WTC11 (cell line): ENCODE measurements at regions of chr20 and their contacts with region 1.

Region 1: GRCh38 chr20:22691369-22692118 is 107.2 kb upstream of the FOXA2 start:
- DNase-seq: peak; percentile 80
- ATAC-seq: peak; percentile 96
- H3K4me3 Mint-ChIP-seq: no peak overlapping the region
- H3K27ac Mint-ChIP-seq: no peak overlapping the region
- H3K4me1 Mint-ChIP-seq: peaks cover 3% of the 10 kb centered on the region
- H3K27me3 Mint-ChIP-seq: peaks cover 20% of the 10 kb centered on the region
- CTCF ChIP-seq: peak; percentile 77

Region 2: GRCh38 chr20:22333885-22334545 is 357.5 kb before region 1 on chr20:
- CTCF ChIA-PET with region 1: interaction called, 17 read pairs
- POLR2A ChIA-PET with region 1: no interaction called
- DNase-seq: peak; percentile 75
- ATAC-seq: peak; percentile 94
- H3K4me3 Mint-ChIP-seq: no peak overlapping the region
- H3K27ac Mint-ChIP-seq: no peak overlapping the region
- H3K4me1 Mint-ChIP-seq: 0 out of 2 replicates have a peak, but pooled peaks cover under 1% of the 10 kb centered on the region
- H3K27me3 Mint-ChIP-seq: peaks cover 21% of the 10 kb centered on the region
- CTCF ChIP-seq: peak; percentile 83

Region 3: DNA sequence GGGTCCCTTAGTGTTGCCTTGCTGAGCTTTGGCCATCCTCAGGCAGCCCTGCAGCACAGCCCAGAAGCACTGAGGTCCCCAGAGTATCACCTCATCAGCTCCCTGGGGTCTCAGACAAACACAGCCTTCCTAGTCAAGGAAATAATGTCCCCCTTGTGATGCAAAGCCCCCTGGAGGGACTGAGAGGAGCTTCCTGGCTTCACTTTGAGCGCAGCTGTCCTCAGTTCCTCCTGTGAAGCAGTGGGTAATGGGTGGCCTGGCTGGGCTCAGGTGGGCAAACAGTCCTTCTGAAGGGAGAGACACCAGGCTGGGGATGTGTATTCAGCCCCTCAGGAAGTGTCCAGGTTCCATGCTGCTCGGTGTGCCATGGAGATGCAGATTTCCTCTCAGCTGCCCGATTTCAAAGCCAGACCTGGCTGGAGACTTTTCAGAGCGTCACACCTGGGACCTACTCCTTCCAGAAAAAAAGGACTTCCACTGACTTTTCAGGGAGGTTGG is 28.0 kb before region 1 on chr20:
- CTCF ChIA-PET with region 1: interaction called, 10 read pairs
- POLR2A ChIA-PET with region 1: no interaction called
- DNase-seq: peak; percentile 44
- ATAC-seq: peak; percentile 90
- H3K4me3 Mint-ChIP-seq: no peak overlapping the region
- H3K27ac Mint-ChIP-seq: peak overlapping the region; percentile 68
- H3K4me1 Mint-ChIP-seq: peaks cover 42% of the 10 kb centered on the region
- H3K27me3 Mint-ChIP-seq: peaks cover 9% of the 10 kb centered on the region; the same call in 1 of the 2 replicates
- CTCF ChIP-seq: no peak

Region 4: DNA sequence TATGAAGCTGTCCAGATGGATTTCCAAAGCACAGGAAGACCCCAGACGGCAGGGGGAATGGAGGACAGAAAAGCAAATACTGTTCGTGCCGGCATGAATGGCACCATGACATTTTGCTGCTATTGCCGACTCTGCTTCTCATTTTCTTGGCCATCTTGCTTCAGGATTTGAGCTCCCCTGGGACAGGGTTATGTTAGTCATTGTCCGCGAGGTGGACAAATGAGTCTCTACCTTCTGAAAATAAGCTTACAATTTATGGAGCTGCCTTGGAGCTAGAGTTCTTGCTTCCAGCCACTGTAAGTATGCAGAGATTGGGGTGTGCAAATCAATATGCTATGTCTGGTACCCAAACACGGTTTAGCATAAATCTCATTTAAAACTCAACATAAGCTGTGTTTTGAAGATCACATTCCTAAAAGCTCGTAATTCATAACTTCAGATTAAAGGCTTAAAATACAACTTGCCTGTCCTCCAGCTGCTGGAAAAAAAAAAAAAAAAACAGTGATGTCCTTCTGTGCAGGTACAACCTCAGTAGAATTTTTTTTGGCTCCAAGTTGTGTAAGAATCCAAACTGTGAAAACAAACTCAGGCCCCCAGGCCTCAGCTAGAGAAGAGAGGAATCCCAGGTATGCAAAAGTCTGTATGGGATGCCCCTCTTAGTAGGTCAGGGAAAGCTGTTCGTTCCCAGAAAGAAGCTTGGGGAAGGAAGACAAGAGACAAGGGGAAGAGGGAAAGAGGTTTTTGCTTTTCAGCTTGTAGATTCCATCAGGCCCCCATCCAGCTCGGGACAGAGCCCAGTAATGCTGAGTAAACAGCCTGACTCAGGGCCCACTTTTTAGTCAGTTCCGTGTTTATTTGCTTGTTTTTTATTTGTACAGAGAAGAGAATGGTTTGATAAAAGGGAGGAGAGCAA is 77.0 kb after region 1 on chr20:
- CTCF ChIA-PET with region 1: interaction called, 19 read pairs
- POLR2A ChIA-PET with region 1: no interaction called
- DNase-seq: no peak
- ATAC-seq: peak; percentile 55
- H3K4me3 Mint-ChIP-seq: no peak overlapping the region
- H3K27ac Mint-ChIP-seq: 0 out of 2 replicates have a peak overlapping the region, but pooled peaks have one; percentile 0
- H3K4me1 Mint-ChIP-seq: 0 out of 2 replicates have a peak, but pooled peaks cover 6% of the 10 kb centered on the region
- H3K27me3 Mint-ChIP-seq: no peaks in the 10 kb centered on the region
- CTCF ChIP-seq: no peak

Region 5: DNA sequence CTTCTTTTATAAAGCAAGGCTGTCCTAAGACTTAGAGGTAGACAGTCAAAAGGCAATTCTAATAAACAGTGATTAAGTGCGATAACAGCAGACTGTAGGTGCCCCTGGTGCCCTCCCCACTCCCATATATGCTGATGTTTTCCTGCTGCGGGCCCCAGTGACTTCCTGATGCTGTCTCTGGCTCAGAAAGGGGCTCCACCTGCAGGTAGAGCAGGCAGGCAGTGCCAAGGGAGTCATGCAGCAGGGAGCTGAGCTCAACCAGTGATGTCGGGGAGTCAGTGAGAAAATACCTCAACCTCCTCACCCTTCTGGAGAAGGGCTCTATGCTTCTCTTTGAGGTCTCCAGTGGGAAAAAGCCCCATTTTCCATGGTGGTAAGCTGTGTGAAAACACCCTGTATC is 216.9 kb after region 1 on chr20:
- CTCF ChIA-PET with region 1: interaction called, 18 read pairs
- POLR2A ChIA-PET with region 1: no interaction called
- DNase-seq: peak; percentile 17
- ATAC-seq: peak; percentile 80
- H3K4me3 Mint-ChIP-seq: no peak overlapping the region
- H3K27ac Mint-ChIP-seq: no peak overlapping the region
- H3K4me1 Mint-ChIP-seq: peaks cover 5% of the 10 kb centered on the region; the same call in 1 of the 2 replicates
- H3K27me3 Mint-ChIP-seq: no peaks in the 10 kb centered on the region
- CTCF ChIP-seq: no peak

Region 6: DNA sequence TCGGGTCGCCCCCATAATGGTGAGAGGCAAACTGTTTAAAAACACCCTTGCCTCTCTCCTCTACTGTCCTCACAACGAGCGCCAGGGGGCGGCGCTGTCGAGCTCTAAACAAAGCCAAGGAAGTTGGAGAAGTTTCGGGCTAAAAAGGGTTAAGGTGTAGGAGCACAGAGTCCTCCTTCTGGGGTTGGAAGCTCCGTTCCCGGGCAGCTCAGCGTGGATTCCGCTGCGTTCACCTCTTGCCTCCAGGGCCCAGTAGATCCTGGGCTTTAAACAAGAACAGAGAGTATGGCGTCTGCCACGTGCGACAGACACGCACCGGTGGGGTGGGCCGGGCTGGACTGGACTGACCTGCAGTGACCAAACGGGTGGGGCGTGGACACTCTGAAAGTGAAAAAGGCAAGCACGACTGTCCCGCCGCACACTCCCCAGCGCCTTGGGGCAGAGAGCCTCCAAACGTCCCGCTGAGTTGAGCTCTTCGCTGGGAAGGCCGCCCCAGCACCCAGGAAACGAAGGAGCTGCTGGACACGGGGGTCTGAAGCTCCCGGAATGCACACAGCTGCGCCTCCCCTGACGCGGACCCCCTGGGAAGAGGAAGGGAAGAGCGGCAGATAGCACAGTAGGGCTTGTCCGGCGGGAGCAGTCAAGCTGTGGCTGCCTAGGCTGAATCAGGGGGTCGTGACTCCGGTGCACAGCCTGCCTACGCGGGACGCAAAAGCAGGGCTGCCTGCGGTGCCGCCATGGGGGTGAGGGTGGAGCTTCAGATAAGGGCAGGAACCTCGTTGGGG is 359.5 kb after region 1 on chr20:
- CTCF ChIA-PET with region 1: interaction called, 41 read pairs
- POLR2A ChIA-PET with region 1: no interaction called
- DNase-seq: peak; percentile 94
- ATAC-seq: peak; percentile 64
- H3K4me3 Mint-ChIP-seq: peak overlapping the region; percentile 89
- H3K27ac Mint-ChIP-seq: no peak overlapping the region; the same call in 1 of the 2 replicates
- H3K4me1 Mint-ChIP-seq: peaks cover 17% of the 10 kb centered on the region
- H3K27me3 Mint-ChIP-seq: peaks cover 75% of the 10 kb centered on the region
- CTCF ChIP-seq: peak; percentile 89

Region 7: DNA sequence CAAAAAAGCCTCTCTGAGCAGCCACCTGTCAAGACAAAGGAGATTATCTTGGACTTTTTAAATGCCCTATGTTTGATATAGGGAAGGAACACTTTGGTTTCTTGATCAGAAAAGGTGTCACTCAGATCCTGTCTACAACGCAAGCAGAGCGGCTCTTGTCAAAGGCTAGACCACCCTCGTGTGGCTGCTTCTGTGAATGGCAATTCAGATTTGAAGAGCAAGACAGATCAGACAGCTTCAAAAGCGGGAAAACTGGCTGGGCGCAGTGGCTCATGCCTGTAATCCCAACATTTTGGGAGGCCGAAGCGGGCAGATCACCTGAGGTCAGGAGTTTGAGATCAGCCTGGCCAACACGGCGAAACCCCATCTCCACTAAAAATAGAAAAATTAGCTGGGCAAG is 649.0 kb after region 1 on chr20:
- CTCF ChIA-PET with region 1: interaction called, 40 read pairs
- POLR2A ChIA-PET with region 1: no interaction called
- DNase-seq: peak; percentile 74
- ATAC-seq: peak; percentile 92
- H3K4me3 Mint-ChIP-seq: no peak overlapping the region
- H3K27ac Mint-ChIP-seq: no peak overlapping the region
- H3K4me1 Mint-ChIP-seq: peaks cover 13% of the 10 kb centered on the region
- H3K27me3 Mint-ChIP-seq: no peaks in the 10 kb centered on the region; the same call in 1 of the 2 replicates
- CTCF ChIP-seq: 0 out of 2 replicates have a peak, but pooled peaks have one; percentile 21